ENCODE measurements at regions of chr1 and their contacts with region 1.

Region 1: DNA sequence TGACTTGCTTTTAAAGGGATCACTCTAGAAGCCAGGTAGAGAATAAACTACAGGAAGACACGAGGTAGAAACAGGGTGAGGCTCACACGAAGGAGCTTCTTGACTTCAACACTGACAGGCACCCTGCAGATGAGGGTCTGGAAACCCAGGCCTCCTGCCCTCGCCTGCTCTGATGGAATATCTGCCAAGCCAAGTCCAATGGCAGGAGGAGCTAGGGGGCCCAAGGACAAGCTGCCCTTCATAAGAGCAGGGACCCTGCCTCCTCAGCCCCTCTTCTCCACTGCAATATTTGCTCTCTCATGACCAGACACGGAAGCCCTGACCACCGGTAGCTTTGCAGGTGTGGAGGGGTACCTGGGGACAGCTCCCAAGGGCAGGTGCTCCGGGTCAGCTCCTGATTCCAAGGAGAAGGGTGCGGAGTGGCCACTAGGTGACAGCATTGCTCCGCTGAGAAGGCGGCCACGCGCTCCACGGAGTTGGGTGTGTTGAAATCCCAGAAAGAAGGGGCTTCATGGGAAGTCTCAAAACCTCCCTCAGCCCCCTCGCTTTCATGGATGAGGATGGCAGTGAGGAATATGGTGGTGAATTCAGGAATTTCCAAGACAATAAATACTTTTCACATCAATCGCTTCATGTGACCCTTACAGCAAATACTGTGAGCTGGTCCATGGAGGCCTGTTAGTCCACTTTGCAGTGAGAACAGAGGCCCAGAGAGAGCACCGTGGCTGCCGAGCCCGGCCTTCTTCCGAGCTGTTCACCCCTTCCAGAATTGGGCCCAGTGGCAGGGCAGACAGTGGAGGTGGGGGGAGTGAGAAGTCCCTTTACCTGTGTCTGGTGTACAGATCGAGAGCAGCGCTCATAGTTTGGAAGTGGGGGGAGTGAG is 33.2 kb upstream of the PAX7 start:
- DNase-seq: no peak
- H3K4me3 ChIP-seq: no peak overlapping the region
- H3K27me3 ChIP-seq: no peaks in the 10 kb centered on the region
- CTCF ChIP-seq: peak; percentile 97

Region 2: DNA sequence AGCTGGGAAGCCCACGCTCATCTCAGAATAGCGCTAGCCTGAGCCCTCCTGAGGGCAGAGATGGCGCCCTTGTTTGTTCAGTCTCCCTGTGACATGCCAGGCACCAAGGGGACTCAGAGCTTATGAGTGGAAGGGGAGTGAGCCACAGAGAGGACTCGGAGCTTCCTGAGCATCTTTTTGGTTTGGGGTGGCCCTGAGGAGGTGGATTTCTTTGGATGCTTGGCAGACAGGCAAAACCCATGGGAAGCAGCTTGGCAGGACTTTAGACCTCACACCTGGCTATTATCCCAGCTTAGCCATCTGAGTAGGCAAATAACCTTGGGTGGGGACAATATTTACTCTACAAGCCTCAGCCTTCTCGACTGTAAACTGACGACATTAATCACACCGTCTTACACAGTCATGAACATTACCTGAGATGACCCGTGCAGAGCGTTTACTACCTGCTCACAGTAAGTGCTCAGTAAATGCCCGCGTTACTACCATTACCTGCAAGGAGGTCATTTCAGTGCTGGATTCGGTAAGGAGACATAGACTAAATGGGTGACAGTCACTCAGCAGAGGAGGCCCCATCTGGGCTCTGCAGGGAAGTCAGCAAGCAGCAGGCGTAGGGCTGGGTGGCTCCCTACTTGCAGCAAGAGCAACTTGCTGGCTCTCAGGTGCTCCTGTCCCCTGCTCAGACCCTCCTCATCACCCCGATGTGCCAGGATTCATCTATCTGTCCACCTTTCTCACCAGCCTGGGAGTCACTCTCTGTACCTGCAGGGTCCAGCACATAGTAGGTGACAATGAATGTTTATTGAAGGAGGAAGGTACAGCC is 61.8 kb before region 1 on chr1:
- CTCF ChIA-PET with region 1: no interaction called
- POLR2A ChIA-PET with region 1: no interaction called
- DNase-seq: no peak
- H3K4me3 ChIP-seq: no peak overlapping the region
- H3K27me3 ChIP-seq: no peaks in the 10 kb centered on the region
- CTCF ChIP-seq: no peak

Region 3: DNA sequence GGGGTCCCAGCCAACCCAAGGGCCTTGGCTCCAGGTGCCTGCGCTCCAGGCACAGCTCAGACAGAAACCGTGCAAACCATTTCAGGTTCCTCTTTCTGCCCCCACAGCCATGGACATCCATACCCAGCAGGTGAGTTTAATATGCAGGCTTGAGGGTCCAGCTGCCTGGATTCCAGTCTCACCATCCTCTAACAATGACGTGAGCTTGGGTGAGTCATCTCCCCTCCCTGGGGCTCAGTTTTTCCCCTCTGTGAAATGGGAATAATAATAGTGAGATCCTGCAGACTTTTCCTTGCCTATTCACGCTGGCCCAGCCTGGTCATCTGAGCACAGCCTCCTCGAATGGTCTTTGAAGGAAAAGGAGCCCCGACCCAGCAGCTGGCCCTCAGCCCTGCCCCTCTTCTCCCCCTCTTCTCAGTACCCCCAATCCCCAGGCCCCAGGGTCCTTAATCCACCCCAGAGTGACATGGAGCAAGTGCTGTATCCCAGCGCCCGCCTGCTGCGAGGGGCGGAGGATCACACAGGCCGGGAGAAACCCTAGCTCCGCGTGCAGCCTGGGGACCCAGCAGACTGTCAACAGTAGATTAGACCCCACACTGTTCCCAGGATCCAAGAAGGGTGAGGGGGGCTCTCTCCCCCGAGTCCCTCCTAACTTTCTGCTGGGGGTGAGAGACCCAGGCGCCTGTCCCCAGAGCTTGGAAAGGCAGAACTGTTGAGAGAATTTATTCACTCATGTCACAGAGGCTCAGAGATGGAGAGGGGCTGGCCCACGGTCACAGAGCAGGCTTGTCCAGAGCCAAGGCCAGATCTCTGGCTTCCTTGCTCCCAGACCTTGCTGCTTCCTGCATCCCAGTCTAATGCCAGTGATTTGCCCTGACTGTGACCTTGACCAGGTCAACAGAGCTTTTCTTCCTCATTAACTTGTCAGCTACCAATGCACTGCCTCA is 212.8 kb after region 1 on chr1:
- CTCF ChIA-PET with region 1: interaction called, 174 read pairs
- POLR2A ChIA-PET with region 1: no interaction called
- DNase-seq: no peak
- H3K4me3 ChIP-seq: no peak overlapping the region
- H3K27me3 ChIP-seq: no peaks in the 10 kb centered on the region
- CTCF ChIP-seq: no peak

Region 4: GRCh38 chr1:18820791-18821641 is 223.6 kb after region 1 on chr1:
- CTCF ChIA-PET with region 1: interaction called, 174 read pairs
- POLR2A ChIA-PET with region 1: interaction called, 3 read pairs
- DNase-seq: no peak
- H3K4me3 ChIP-seq: no peak overlapping the region
- H3K27me3 ChIP-seq: peaks cover 4% of the 10 kb centered on the region
- CTCF ChIP-seq: peak; percentile 95

Region 5: GRCh38 chr1:18875107-18875795 is 277.9 kb after region 1 on chr1:
- CTCF ChIA-PET with region 1: interaction called, 67 read pairs
- POLR2A ChIA-PET with region 1: no interaction called
- DNase-seq: peak; percentile 21
- H3K4me3 ChIP-seq: no peak overlapping the region
- H3K27me3 ChIP-seq: no peaks in the 10 kb centered on the region
- CTCF ChIP-seq: peak; percentile 90